ENCODE measurements at regions of chr17 and their contacts with region 1.

Region 1: GRCh38 chr17:42183741-42184711 is 1.2 kb downstream of the HCRT start:
- DNase-seq: peak; percentile 73 to 83 (median 79)
- H3K4me3 ChIP-seq: peak overlapping the region; percentile 63 to 88 (median 72)
- H3K27ac ChIP-seq: no peak overlapping the region
- H3K4me1 ChIP-seq: peaks cover 3 to 51% (median 46%) of the 10 kb centered on the region in 4 experiments
- H3K27me3 ChIP-seq: peaks cover 0 to 33% (median 16%) of the 10 kb centered on the region in 5 experiments

Region 2: DNA sequence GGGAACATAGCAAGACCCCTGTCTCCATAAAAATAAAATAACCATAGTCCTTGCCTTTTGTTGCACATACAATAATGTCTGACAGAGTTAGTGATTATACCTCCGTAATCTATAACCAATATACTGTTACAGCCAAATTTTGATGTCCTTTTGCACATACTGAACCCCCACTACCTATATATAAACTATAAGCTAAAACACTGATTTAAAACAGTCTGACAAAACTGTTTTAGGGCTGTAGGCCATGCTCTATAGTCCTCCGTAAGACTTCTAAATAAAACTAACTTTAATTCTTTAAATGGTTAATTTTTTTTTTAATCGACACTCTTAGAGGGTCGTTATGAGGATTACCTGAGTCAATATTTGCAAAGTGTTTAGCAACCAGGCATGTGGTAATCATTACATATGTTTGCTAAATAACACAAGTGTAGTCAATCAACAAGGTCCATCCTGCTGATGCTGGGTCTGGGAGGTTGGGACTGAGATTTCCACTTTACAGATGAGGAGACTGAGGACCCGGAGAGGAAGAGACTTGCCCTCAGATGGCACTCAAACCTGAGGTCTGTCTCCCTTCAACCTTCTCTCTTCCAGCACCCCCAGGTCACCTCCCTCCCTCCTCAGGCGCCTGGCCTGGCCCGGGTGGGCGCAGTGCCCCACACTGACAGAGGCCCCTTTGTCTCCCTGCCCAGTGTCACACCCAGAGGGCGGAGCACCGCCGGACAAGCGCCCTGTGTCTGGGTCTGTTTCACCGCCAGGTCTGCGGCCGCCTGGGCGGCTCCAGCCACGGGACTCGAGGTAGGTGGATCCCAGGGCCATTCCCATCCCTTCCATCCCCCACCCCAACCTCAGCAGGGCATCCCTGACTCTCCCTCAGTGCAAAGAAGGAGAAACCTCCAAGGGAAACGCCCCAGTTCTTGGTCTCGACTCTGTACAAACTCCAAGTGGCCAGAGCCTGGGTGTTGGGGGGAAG is 96.0 kb before region 1 on chr17:
- CTCF ChIA-PET with region 1: no interaction called
- POLR2A ChIA-PET with region 1: no interaction called
- DNase-seq: no peak
- H3K4me3 ChIP-seq: no peak overlapping the region
- H3K27ac ChIP-seq: no peak overlapping the region
- H3K4me1 ChIP-seq: peaks cover 0 to 10% (median 3%) of the 10 kb centered on the region in 4 experiments
- H3K27me3 ChIP-seq: no peaks in the 10 kb centered on the region

Region 3: DNA sequence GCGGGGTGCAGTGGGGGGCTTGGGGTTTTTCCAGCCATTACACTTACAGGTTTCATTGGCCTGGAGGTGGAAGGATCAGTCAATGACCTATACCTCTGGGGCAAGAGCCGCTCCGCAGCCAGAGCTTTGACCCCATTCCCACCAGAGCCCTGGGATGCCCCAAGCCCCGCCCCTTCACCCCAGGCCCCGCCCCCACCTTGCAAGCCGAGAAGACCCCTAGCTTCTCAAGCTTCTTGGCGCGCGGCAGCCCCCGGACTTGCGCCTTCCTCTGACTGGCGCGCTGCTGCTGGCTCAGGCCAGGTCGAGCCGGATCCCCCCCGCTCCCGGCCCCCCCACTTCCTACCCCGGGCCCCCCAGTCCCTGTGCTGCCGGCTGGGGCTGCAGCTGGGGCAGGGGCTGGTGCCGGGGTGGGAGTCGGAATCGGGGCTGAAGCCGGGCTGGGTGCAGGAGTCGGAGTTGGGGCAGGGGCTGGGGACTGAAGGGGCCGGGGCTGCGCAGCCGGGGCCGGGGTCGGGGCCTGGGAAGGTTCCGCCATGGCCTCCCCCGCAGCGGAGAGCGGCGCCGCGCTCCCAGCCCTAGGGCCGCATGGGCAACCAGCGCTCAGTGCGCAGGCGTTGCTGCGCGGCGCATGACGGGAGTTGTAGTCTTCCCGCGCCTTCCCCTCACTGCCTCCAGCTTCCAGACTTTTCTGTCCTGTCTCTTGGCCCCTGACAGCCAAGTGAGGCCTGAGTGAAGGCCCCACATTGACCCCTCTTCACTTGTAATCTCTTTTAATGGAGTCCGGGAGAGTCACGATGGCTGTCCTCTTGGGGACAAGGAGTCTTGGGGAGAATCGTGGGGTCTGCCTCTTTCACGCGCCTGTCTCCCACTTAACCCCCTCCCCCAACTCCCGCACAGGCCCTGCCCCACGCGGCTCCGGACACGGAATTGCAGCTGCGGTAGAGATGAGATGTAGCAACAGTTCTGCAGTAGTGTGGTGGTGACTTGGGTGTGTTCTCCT is 63.0 kb before region 1 on chr17 and contains the start of gene KAT2A:
- CTCF ChIA-PET with region 1: interaction called, 19 read pairs
- POLR2A ChIA-PET with region 1: interaction called, 4 read pairs
- DNase-seq: peak; percentile 56 to 77 (median 69)
- H3K4me3 ChIP-seq: peak within 1 kb of the TSS; percentile 8 to 72 (median 57)
- H3K27ac ChIP-seq: peak within 1 kb of the TSS in 1 of 2 experiments; percentile 54
- H3K4me1 ChIP-seq: peaks cover 0 to 15% (median 13%) of the 10 kb centered on the region in 4 experiments
- H3K27me3 ChIP-seq: no peaks in the 10 kb centered on the region

Region 4: GRCh38 chr17:42132941-42133340 is 51.1 kb before region 1 on chr17:
- CTCF ChIA-PET with region 1: interaction called, 11 read pairs
- POLR2A ChIA-PET with region 1: no interaction called
- DNase-seq: peak; percentile 59 to 83 (median 77)
- H3K4me3 ChIP-seq: peak overlapping the region in 5 of 7 experiments; percentile 7 to 61 (median 46)
- H3K27ac ChIP-seq: peak overlapping the region in 1 of 2 experiments; percentile 60
- H3K4me1 ChIP-seq: peaks cover 17 to 72% (median 55%) of the 10 kb centered on the region in 4 experiments
- H3K27me3 ChIP-seq: no peaks in the 10 kb centered on the region

Region 5: GRCh38 chr17:42163113-42163512 is 20.9 kb before region 1 on chr17:
- CTCF ChIA-PET with region 1: interaction called, 16 read pairs
- POLR2A ChIA-PET with region 1: interaction called, 4 read pairs
- DNase-seq: peak in 2 of 3 donors; percentile 38 to 47
- H3K4me3 ChIP-seq: no peak overlapping the region
- H3K27ac ChIP-seq: no peak overlapping the region
- H3K4me1 ChIP-seq: no peaks in the 10 kb centered on the region
- H3K27me3 ChIP-seq: no peaks in the 10 kb centered on the region

Region 6: DNA sequence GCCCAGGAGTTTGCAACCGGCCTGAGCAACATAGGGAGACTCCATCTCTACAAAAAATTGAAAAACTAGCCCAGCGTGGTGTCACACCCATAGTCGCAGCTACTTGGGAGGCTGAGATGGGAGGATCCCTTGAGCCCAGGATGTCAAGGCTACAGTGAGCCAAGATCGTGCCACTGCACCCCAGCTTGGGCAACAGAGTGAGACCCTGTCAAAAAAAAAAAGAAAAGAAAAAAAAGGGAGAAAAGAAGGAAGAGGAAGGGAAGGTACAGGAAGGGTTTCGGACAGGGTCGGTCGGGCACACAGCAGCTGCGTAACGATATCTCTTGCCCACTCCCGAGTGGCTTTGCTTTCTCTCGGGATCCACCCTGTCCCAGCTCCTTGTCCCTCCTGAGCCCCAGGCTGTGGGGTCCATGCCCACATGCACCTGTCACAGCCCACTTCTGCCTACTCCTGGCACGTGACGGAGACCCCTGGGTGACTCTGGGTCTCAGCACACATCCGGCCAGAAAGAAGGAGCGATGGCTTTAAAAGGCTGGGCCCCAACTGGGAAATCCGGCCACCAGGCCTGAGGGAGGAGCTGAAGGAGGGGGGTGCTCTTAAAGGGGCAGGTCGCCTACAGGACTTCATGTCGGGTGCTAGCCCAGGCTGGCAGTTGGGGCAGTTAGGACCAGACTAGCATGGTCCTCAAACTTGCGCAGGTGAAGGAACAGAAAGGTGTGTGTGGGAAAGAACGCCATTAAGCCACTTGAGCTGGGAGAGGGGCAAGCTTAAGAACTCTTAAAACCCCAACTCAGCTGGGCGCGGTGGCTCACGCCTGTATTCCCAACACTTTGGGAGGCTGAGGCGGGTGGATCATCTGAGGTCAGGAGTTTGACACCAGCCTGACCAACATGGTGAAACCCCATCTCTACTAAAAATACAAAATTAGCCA is 10.2 kb after region 1 on chr17 and contains the start of gene GHDC:
- CTCF ChIA-PET with region 1: interaction called, 14 read pairs
- POLR2A ChIA-PET with region 1: no interaction called
- DNase-seq: peak; percentile 65 to 82 (median 77)
- H3K4me3 ChIP-seq: peak within 1 kb of the TSS; percentile 79 to 99 (median 96)
- H3K27ac ChIP-seq: peak within 1 kb of the TSS; percentile 36 to 71
- H3K4me1 ChIP-seq: peaks cover 8 to 37% (median 26%) of the 10 kb centered on the region in 4 experiments
- H3K27me3 ChIP-seq: no peaks in the 10 kb centered on the region